ENCODE measurements at regions of chr3 and their contacts with region 1.

Region 1: GRCh38 chr3:52339612-52340011 is 23.5 kb downstream of the DNAH1 start:
- DNase-seq: peak; percentile 87
- ATAC-seq: peak; percentile 73
- H3K4me3 ChIP-seq: no peak overlapping the region
- H3K27ac ChIP-seq: no peak overlapping the region
- H3K4me1 ChIP-seq: peaks cover 4% of the 10 kb centered on the region; the same call in 1 of the 2 replicates
- H3K27me3 ChIP-seq: no peaks in the 10 kb centered on the region
- CTCF ChIP-seq: peak; percentile 80
- POLR2A ChIP-seq: no peak
- RAD21 ChIP-seq: peak; percentile 85

Region 2: DNA sequence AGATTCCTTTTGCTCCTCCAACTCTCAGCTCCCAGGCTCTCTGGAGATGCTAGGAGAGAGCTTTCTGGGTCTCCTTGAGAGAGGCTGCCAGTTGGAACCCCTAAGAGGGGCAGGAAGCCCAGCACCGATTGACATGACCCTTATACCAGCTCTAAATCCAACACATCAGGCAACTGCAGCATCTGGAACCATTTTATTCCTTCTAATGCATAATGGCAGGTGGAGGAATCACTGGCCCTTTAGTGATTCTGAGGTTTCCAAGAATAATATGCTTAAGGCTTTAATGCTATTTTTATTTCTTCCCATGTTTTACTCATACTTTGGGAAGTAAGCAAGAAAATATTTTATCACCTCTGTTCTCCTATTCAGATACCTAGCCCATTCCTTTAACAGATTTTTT is 728.9 kb before region 1 on chr3:
- CTCF ChIA-PET with region 1: no interaction called
- POLR2A ChIA-PET with region 1: no interaction called
- dilution Hi-C with region 1: no loop called
- in situ Hi-C with region 1: no loop called
- intact Hi-C with region 1: no loop called
- DNase-seq: no peak
- ATAC-seq: no peak
- H3K4me3 ChIP-seq: no peak overlapping the region
- H3K27ac ChIP-seq: no peak overlapping the region
- H3K4me1 ChIP-seq: no peaks in the 10 kb centered on the region; the same call in 1 of the 2 replicates
- H3K27me3 ChIP-seq: no peaks in the 10 kb centered on the region
- CTCF ChIP-seq: no peak
- POLR2A ChIP-seq: no peak
- RAD21 ChIP-seq: no peak

Region 3: GRCh38 chr3:52001443-52001974 is 338.1 kb before region 1 on chr3:
- CTCF ChIA-PET with region 1: no interaction called
- POLR2A ChIA-PET with region 1: no interaction called
- dilution Hi-C with region 1: no loop called
- in situ Hi-C with region 1: no loop called
- intact Hi-C with region 1: loop called (anchors 5 kb)
- DNase-seq: peak; percentile 43
- ATAC-seq: peak; percentile 75
- H3K4me3 ChIP-seq: no peak overlapping the region
- H3K27ac ChIP-seq: no peak overlapping the region
- H3K4me1 ChIP-seq: peaks cover 11% of the 10 kb centered on the region
- H3K27me3 ChIP-seq: no peaks in the 10 kb centered on the region
- CTCF ChIP-seq: peak; percentile 96
- POLR2A ChIP-seq: peak; percentile 54; the same call in 1 of the 2 replicates
- RAD21 ChIP-seq: peak; percentile 97

Region 4: DNA sequence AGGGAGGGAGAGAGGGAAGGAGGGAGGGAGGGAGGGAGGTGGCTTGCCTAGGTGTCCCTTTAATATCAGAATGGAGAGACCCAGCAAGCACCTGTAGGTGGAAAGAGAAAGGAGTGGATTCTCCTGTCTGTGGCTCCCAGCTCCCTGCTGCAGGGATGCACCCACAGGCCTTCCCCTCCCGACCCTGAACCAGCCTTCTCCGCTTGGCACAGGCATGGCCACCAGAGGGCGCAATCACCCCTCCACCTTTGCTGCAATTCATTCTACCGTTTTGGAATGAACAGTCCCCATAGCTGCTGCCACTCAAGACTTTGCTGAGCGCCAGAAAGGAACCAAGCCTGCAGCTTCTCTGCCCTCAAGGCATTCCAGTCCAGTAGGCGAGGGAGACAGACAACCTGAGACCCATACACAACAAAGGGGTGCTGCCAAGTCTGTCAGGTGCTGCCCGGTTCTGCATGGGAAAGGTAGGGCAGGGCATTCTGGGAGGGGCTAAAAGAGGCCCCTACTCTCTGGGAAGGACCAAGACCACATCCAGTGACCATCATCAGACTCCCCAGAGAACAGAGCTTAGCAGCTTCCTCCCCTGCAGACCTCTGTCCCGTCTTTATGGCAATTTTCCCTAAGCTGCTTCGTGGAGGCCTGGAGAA is 119.1 kb before region 1 on chr3:
- CTCF ChIA-PET with region 1: interaction called, 10 read pairs
- POLR2A ChIA-PET with region 1: no interaction called
- dilution Hi-C with region 1: no loop called
- in situ Hi-C with region 1: no loop called
- intact Hi-C with region 1: loop called (anchors 1 kb)
- DNase-seq: peak; percentile 63
- ATAC-seq: peak; percentile 73
- H3K4me3 ChIP-seq: no peak overlapping the region
- H3K27ac ChIP-seq: no peak overlapping the region
- H3K4me1 ChIP-seq: peaks cover 8% of the 10 kb centered on the region
- H3K27me3 ChIP-seq: no peaks in the 10 kb centered on the region
- CTCF ChIP-seq: peak; percentile 88
- POLR2A ChIP-seq: no peak
- RAD21 ChIP-seq: peak; percentile 76

Region 5: GRCh38 chr3:52231502-52232293 is 107.9 kb before region 1 on chr3:
- CTCF ChIA-PET with region 1: interaction called, 5 read pairs
- POLR2A ChIA-PET with region 1: no interaction called
- dilution Hi-C with region 1: no loop called
- in situ Hi-C with region 1: loop called (anchors 5 kb)
- intact Hi-C with region 1: loop called (anchors 1 kb)
- DNase-seq: peak; percentile 33
- ATAC-seq: peak; percentile 75
- H3K4me3 ChIP-seq: no peak overlapping the region
- H3K27ac ChIP-seq: no peak overlapping the region
- H3K4me1 ChIP-seq: peaks cover 6% of the 10 kb centered on the region
- H3K27me3 ChIP-seq: no peaks in the 10 kb centered on the region
- CTCF ChIP-seq: peak; percentile 79
- POLR2A ChIP-seq: no peak
- RAD21 ChIP-seq: peak; percentile 78

Region 6: DNA sequence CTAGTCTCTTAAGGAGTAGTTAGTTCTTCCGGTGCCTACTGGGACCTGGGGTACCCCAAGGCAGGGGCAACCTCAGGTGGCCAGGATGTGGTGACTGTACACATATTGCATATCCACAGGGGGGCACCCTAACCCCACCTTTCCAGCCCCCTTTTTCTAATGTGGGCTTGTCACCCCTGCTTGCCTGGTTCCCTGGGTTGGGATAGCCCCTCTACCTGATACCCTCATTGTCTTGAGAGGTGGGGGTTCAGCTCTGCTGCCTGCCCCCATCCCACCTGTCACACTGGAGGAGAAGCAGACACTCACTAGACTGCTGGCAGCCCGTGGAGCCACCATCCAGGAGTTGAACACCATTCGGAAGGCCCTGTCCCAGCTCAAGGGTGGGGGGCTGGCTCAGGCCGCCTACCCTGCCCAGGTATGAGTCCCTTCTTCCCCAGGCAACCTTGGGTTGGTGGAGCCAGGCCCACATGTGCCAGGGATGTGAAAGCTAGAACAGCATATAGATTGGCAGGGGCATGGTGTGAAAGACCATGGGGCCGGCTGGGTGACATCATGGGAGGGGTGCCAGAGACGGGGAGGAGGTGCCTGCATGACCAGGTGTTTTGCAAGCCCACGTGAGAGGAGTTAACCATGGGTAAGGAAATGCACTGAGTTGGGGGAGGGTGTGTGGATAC is 48.0 kb before region 1 on chr3:
- CTCF ChIA-PET with region 1: interaction called, 6 read pairs
- POLR2A ChIA-PET with region 1: no interaction called
- dilution Hi-C with region 1: no loop called
- in situ Hi-C with region 1: loop called (anchors 5 kb)
- intact Hi-C with region 1: loop called (anchors 1 kb)
- DNase-seq: no peak
- ATAC-seq: peak; percentile 16; the same call in 1 of the 2 replicates
- H3K4me3 ChIP-seq: no peak overlapping the region
- H3K27ac ChIP-seq: no peak overlapping the region
- H3K4me1 ChIP-seq: peaks cover 6% of the 10 kb centered on the region
- H3K27me3 ChIP-seq: no peaks in the 10 kb centered on the region
- CTCF ChIP-seq: peak; percentile 65
- POLR2A ChIP-seq: no peak
- RAD21 ChIP-seq: peak; percentile 81

Region 7: DNA sequence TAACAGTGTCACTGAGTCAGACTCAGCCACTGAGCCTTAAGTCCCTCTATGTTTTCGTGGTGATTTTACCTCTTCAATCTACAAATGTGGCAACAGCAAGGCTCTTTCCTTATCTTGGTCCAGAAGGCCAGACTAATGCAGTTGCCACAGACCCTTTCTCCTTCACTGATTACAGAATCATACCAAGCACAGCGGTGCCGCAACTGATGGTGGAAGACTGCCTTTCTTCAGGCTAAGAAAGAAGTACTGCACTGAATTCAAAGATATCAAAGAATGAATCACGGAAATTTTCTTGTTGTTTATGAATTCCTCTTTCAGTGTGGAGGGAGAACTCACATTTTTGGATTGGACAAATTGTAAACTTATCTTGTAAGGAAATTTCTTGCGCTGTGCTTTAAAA is 989.1 kb after region 1 on chr3:
- CTCF ChIA-PET with region 1: no interaction called
- POLR2A ChIA-PET with region 1: no interaction called
- dilution Hi-C with region 1: no loop called
- in situ Hi-C with region 1: no loop called
- intact Hi-C with region 1: no loop called
- DNase-seq: peak; percentile 69
- ATAC-seq: peak; percentile 79
- H3K4me3 ChIP-seq: no peak overlapping the region
- H3K27ac ChIP-seq: peak overlapping the region; percentile 53; the same call in 1 of the 2 replicates
- H3K4me1 ChIP-seq: peaks cover 2% of the 10 kb centered on the region; the same call in 1 of the 2 replicates
- H3K27me3 ChIP-seq: no peaks in the 10 kb centered on the region
- CTCF ChIP-seq: no peak
- POLR2A ChIP-seq: no peak
- RAD21 ChIP-seq: no peak

Region 8: GRCh38 chr3:53375019-53375418 is 1035.4 kb after region 1 on chr3:
- CTCF ChIA-PET with region 1: no interaction called
- POLR2A ChIA-PET with region 1: no interaction called
- dilution Hi-C with region 1: no loop called
- in situ Hi-C with region 1: no loop called
- intact Hi-C with region 1: no loop called
- DNase-seq: peak; percentile 41
- ATAC-seq: peak; percentile 87
- H3K4me3 ChIP-seq: no peak overlapping the region
- H3K27ac ChIP-seq: no peak overlapping the region
- H3K4me1 ChIP-seq: no peaks in the 10 kb centered on the region
- H3K27me3 ChIP-seq: peaks cover 2% of the 10 kb centered on the region; the same call in 1 of the 2 replicates
- CTCF ChIP-seq: peak; percentile 59
- POLR2A ChIP-seq: no peak
- RAD21 ChIP-seq: peak; percentile 70

Measured in IMR-90 (cell line).